Activated CD8-positive, alpha-beta T cell treated with anti-CD3 and anti-CD28 coated beads for 36 hours (primary cell): ENCODE measurements at regions of chr4 and their contacts with region 1.

Region 1: DNA sequence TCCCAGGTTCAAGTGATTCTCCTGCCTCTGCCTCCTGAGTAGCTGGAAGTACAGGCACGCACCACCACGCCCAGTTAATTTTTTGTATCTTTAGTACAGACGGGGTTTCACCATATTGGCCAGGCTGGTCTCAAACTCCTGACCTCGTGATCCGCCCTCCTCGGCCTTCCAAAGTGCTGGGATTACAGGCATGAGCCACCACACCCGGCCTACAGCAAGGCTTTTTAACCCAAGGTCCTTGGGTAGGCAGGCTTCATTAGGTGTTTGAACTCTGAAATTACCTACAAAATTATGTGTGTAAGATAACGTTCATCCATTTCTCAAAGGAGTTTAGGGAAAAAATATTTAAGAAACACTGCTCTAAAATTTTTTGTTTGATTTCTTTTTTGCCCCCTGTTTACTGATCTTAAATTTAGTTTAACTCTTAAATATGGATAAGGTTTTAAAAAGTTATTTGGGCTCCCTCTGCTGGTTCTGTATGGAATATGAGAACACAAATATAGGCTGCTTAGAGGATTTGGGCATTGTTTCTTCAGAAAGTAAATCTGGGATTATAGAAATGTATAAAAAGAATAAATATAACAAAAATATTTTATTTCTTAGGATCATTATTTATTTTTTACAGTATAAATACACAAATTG is 92.8 kb downstream of the CBR4 start:
- DNase-seq: no peak
- ATAC-seq: no peak
- H3K4me3 Mint-ChIP-seq: no peak overlapping the region
- H3K27ac Mint-ChIP-seq: no peak overlapping the region
- H3K4me1 Mint-ChIP-seq: no peaks in the 10 kb centered on the region
- H3K27me3 Mint-ChIP-seq: no peaks in the 10 kb centered on the region
- CTCF ChIP-seq: peak; percentile 55

Region 2: GRCh38 chr4:168183717-168184608 is 733.3 kb before region 1 on chr4:
- CTCF ChIA-PET with region 1: interaction called, 3 read pairs
- POLR2A ChIA-PET with region 1: no interaction called
- intact Hi-C with region 1: loop called (anchors 10 kb)
- DNase-seq: no peak
- ATAC-seq: no peak
- H3K4me3 Mint-ChIP-seq: no peak overlapping the region
- H3K27ac Mint-ChIP-seq: no peak overlapping the region
- H3K4me1 Mint-ChIP-seq: no peaks in the 10 kb centered on the region
- H3K27me3 Mint-ChIP-seq: no peaks in the 10 kb centered on the region
- CTCF ChIP-seq: peak; percentile 77

Region 3: GRCh38 chr4:168585168-168586091 is 331.8 kb before region 1 on chr4:
- CTCF ChIA-PET with region 1: interaction called, 5 read pairs
- POLR2A ChIA-PET with region 1: no interaction called
- intact Hi-C with region 1: loop called (anchors 10 kb)
- DNase-seq: peak; percentile 59
- ATAC-seq: peak; percentile 68
- H3K4me3 Mint-ChIP-seq: no peak overlapping the region
- H3K27ac Mint-ChIP-seq: no peak overlapping the region
- H3K4me1 Mint-ChIP-seq: peaks cover 2% of the 10 kb centered on the region
- H3K27me3 Mint-ChIP-seq: peaks cover 11% of the 10 kb centered on the region
- CTCF ChIP-seq: peak; percentile 43